A549 (cell line): ENCODE measurements at regions of chr7 and their contacts with region 1.

Region 1: GRCh38 chr7:100852048-100852872 is at the start of gene SLC12A9:
- DNase-seq: peak; percentile 86 to 98
- ATAC-seq: peak; percentile 98 to 99
- H3K4me3 ChIP-seq: peak within 1 kb of the TSS; percentile 77
- H3K27ac ChIP-seq: peak within 1 kb of the TSS; percentile 76 to 85
- H3K4me1 ChIP-seq: 0 out of 3 replicates have a peak, but pooled peaks cover 4% of the 10 kb centered on the region
- CTCF ChIP-seq: peak; percentile 95
- EP300 ChIP-seq: no peak
- POLR2A ChIP-seq: peak; percentile 48; the same call in 1 of the 2 replicates
- RAD21 ChIP-seq: peak; percentile 94 to 98
- polyA plus RNA-seq, gene SLC12A9: 6.2 and 7.0 TPM in 2 replicates

Region 2: DNA sequence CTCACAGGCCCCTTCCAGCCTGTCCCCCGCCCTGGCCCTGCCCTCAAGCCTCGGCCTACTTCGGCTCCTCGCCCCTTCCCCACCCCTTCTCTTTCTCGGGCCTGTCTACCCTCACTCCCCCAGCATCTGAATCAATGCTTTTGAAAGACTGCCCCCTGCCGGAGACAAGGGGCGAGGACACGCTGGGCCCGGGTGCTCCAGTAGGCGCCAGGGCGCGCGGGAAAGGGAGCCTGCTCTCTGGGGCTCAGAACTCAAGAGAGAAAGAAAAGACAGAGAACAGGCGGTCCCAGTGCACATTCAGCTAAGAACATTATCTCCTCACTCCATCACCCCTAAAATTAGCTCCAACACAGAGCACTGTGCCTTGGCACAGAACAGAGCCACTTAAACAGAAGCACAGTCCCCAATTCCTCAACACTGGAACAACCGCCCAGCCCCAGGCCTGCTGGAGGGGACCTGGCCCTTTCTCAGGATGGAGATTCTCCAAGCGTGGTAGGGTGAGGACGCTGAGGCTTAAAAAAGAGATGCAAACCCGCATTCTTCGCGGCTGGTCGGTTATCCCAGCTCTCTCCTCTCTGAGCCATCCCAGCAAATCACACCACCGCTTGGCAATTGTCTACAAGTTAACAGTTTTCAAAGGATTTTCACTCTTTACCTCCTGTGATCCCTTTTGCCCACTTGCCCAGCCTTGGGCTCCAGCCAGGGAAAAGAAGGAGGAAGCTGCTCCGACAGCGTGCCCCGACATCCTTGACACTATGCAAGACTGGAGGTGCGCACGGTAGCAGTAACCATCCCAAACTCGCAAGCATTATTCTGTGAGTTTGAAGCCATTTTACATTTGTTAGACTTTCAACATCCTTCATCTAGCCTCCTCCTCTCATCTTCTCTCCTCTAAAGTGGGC is 160.3 kb before region 1 on chr7:
- CTCF ChIA-PET with region 1: interaction called, 45 read pairs
- POLR2A ChIA-PET with region 1: no interaction called
- DNase-seq: peak; percentile 74 to 93
- ATAC-seq: peak; percentile 72 to 94; a peak in 5 of 6 replicates
- H3K4me3 ChIP-seq: no peak overlapping the region
- H3K27ac ChIP-seq: no peak overlapping the region
- H3K4me1 ChIP-seq: peaks cover 26% of the 10 kb centered on the region
- CTCF ChIP-seq: peak; percentile 87
- EP300 ChIP-seq: no peak
- POLR2A ChIP-seq: no peak
- RAD21 ChIP-seq: peak; percentile 75 to 78

Region 3: DNA sequence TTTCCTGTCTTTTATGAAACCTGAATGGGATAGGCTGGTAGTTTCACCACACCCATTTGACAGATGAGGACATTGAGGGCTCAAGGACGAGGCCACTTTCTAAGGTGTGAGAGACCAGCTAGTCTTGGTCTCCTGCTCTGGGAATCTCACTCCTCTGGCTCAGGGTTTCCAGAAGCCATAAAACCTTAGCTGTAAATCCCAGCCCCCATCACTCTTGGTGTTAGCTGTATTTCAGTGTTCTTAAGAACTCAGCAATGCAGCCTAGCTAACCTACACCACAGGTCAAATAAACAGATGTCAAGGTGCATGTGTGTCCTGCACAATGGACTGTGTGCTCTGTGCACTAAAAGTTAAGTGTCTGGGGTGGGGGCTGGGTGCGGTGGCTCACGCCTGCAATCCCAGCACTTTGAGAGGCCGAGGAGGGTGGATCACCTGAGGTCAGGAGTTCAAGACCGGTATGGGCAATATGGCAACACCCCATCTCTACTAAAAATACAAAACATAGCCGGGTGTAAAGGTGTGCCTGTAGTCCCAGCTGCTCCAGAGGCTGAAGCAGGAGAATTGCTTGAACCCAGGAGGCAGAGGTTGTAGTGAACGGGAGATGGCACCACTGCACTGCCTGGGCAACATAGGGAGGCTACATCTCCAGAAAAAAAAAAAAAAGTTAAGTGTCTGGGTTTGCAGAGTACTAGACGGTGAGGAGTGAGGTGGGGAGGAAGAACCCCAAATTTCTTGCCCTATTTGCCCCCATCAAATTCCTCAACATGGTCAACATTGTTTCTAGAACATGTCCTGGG is 132.5 kb before region 1 on chr7:
- CTCF ChIA-PET with region 1: interaction called, 280 read pairs
- POLR2A ChIA-PET with region 1: no interaction called
- DNase-seq: peak in 1 of 2 experiments; percentile 64
- ATAC-seq: peak; percentile 68 to 80
- H3K4me3 ChIP-seq: peak overlapping the region; percentile 40
- H3K27ac ChIP-seq: peak overlapping the region in 1 of 2 experiments; percentile 70; a peak in 1 of 6 replicates
- H3K4me1 ChIP-seq: peaks cover 11% of the 10 kb centered on the region; the same call in 2 of the 3 replicates
- CTCF ChIP-seq: peak; percentile 55
- EP300 ChIP-seq: no peak
- POLR2A ChIP-seq: no peak
- RAD21 ChIP-seq: peak; percentile 77 to 80

Region 4: GRCh38 chr7:100793806-100794660 is 58.2 kb before region 1 on chr7:
- CTCF ChIA-PET with region 1: interaction called, 169 read pairs
- POLR2A ChIA-PET with region 1: interaction called, 5 read pairs
- DNase-seq: no peak
- ATAC-seq: peak; percentile 26 to 31; a peak in 5 of 6 replicates
- H3K4me3 ChIP-seq: no peak overlapping the region
- H3K27ac ChIP-seq: peak overlapping the region in 1 of 2 experiments; percentile 60; a peak in 3 of 6 replicates
- H3K4me1 ChIP-seq: peaks cover 14% of the 10 kb centered on the region
- CTCF ChIP-seq: no peak
- EP300 ChIP-seq: no peak
- POLR2A ChIP-seq: no peak
- RAD21 ChIP-seq: no peak

Region 5: GRCh38 chr7:100827330-100828227 is 24.7 kb before region 1 on chr7 and contains the start of gene EPHB4:
- CTCF ChIA-PET with region 1: interaction called, 49 read pairs
- POLR2A ChIA-PET with region 1: interaction called, 7 read pairs
- DNase-seq: peak; percentile 73 to 91
- ATAC-seq: peak; percentile 84 to 92
- H3K4me3 ChIP-seq: peak within 1 kb of the TSS; percentile 100
- H3K27ac ChIP-seq: peak within 1 kb of the TSS; percentile 99
- H3K4me1 ChIP-seq: peaks cover 30% of the 10 kb centered on the region; the same call in 2 of the 3 replicates
- CTCF ChIP-seq: peak; percentile 64
- EP300 ChIP-seq: no peak
- POLR2A ChIP-seq: peak; percentile 75
- RAD21 ChIP-seq: peak; percentile 41 to 51
- polyA plus RNA-seq, gene EPHB4: 37.8 and 40.5 TPM in 2 replicates

Region 6: GRCh38 chr7:100865971-100866728 is 13.9 kb after region 1 on chr7:
- CTCF ChIA-PET with region 1: interaction called, 44 read pairs
- POLR2A ChIA-PET with region 1: interaction called, 3 read pairs
- DNase-seq: no peak
- ATAC-seq: no peak; a peak in 1 of 6 replicates
- H3K4me3 ChIP-seq: no peak overlapping the region
- H3K27ac ChIP-seq: peak overlapping the region; percentile 95 to 98
- H3K4me1 ChIP-seq: peaks cover 22% of the 10 kb centered on the region
- CTCF ChIP-seq: no peak
- EP300 ChIP-seq: no peak
- POLR2A ChIP-seq: no peak
- RAD21 ChIP-seq: no peak

Region 7: DNA sequence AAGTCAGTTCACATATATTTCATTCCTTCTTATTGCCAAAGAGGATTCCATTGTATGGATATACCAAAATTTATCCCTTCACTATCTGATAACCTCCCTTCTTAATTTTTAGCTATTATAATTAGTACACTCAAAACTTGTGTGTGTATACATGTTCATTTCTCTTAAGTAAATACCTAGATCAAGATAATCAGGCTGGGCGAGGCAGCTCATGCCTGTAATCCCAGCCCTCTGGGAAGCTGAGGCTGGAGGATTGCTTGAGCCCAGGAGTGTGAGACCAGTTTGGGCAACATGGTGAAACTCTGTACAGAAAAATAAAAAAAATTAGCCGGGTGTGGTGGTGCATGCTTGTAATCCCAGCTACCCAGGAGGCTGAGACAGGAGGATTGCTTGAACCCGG is 59.2 kb after region 1 on chr7:
- CTCF ChIA-PET with region 1: no interaction called
- POLR2A ChIA-PET with region 1: no interaction called
- DNase-seq: no peak
- ATAC-seq: no peak
- H3K4me3 ChIP-seq: no peak overlapping the region
- H3K27ac ChIP-seq: no peak overlapping the region
- H3K4me1 ChIP-seq: no peaks in the 10 kb centered on the region
- CTCF ChIP-seq: no peak
- EP300 ChIP-seq: no peak
- POLR2A ChIP-seq: no peak
- RAD21 ChIP-seq: no peak

Region 8: GRCh38 chr7:100957832-100958421 is 105.7 kb after region 1 on chr7:
- CTCF ChIA-PET with region 1: no interaction called
- POLR2A ChIA-PET with region 1: no interaction called
- DNase-seq: peak in 1 of 2 experiments; percentile 35
- ATAC-seq: peak in 1 of 2 experiments; percentile 48; a peak in 3 of 6 replicates
- H3K4me3 ChIP-seq: no peak overlapping the region
- H3K27ac ChIP-seq: no peak overlapping the region
- H3K4me1 ChIP-seq: no peaks in the 10 kb centered on the region
- CTCF ChIP-seq: no peak
- EP300 ChIP-seq: no peak
- POLR2A ChIP-seq: 0 out of 2 replicates have a peak, but pooled peaks have one; percentile 9
- RAD21 ChIP-seq: no peak